Lower lobe of right lung (tissue), 2 donors: ENCODE measurements at regions of chr2 and their contacts with region 1.

Region 1: DNA sequence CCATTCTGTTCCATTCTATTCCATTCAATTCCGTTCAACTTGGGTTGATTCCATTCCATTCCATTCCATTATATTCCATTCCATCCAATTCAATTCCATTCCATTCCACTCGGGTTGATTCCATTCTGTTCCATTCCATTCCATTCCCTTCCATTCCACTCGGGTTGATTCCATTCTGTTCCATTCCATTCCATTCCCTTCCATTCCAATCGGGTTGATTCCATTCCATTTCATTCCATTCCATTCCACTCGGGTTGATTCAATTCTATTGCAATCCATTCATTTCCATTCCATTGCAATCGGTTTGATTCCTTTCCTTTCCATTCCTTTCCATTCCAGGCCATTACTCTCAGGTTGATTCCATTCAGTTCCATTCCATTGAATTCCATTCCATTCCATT is 1138.4 kb downstream of the RPIA start:
- DNase-seq: no peak
- ATAC-seq: peak; percentile 40 to 49
- H3K4me3 ChIP-seq: no peak overlapping the region
- H3K27ac ChIP-seq: no peak overlapping the region
- H3K4me1 ChIP-seq: no peaks in the 10 kb centered on the region
- H3K27me3 ChIP-seq: no peaks in the 10 kb centered on the region
- CTCF ChIP-seq: no peak

Region 2: GRCh38 chr2:88651660-88652059 is 1178.2 kb before region 1 on chr2:
- intact Hi-C with region 1: no loop called
- DNase-seq: no peak
- ATAC-seq: no peak
- H3K4me3 ChIP-seq: no peak overlapping the region
- H3K27ac ChIP-seq: no peak overlapping the region
- H3K4me1 ChIP-seq: no peaks in the 10 kb centered on the region
- H3K27me3 ChIP-seq: no peaks in the 10 kb centered on the region
- CTCF ChIP-seq: no peak

Region 3: DNA sequence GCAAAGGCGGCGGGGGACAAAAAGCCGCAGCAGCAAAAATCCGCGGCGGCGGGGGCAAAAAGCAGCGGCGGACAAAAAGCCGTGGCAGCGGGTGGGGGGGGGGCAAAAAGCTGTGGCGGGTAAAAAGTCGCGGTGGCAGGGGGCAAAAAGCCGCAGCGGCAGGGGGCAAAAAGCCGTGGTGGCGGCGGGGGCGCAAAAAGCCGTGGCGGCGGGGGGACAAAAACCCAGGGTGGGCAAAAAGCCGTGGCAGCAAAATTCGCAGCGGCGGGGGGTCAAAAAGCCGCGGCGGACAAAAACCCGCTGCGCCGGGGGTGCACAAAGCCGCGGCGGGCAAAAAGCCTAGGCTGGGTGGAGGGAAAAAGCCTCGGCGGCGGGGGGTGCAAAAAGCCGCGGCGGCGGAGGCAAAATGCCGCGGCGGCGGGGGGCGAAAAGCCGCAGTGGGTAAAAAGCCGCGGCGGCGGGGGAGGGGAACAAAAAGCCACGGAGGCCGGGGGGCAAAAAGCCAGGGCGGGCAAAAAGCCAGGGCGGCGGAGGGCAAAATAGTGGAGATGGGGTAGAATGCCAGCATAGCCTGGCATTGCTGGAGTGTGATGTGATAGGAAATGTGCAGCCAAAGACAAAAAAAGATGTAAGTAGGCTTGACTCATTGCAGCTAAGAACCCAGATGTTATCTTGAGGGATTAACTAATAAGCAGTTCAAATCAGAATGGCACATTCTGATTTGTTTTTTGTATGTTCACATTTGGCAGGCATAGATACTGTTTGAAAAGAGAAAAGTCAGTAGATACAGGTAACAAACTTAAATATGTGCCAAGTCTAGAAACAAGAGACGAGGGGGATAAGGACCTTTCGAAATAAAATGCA is 62.0 kb before region 1 on chr2:
- intact Hi-C with region 1: no loop called
- DNase-seq: peak; percentile 43
- ATAC-seq: no peak
- H3K4me3 ChIP-seq: no peak overlapping the region
- H3K27ac ChIP-seq: no peak overlapping the region
- H3K4me1 ChIP-seq: no peaks in the 10 kb centered on the region
- H3K27me3 ChIP-seq: peaks cover 48% of the 10 kb centered on the region
- CTCF ChIP-seq: no peak

Region 4: GRCh38 chr2:89784643-89785359 is 45.0 kb before region 1 on chr2:
- intact Hi-C with region 1: loop called (anchors 5 kb)
- DNase-seq: no peak
- ATAC-seq: no peak
- H3K4me3 ChIP-seq: no peak overlapping the region
- H3K27ac ChIP-seq: no peak overlapping the region
- H3K4me1 ChIP-seq: no peaks in the 10 kb centered on the region
- H3K27me3 ChIP-seq: no peaks in the 10 kb centered on the region
- CTCF ChIP-seq: no peak